GM12878 (cell line): ENCODE measurements at regions of chr18 and their contacts with region 1.

Region 1: DNA sequence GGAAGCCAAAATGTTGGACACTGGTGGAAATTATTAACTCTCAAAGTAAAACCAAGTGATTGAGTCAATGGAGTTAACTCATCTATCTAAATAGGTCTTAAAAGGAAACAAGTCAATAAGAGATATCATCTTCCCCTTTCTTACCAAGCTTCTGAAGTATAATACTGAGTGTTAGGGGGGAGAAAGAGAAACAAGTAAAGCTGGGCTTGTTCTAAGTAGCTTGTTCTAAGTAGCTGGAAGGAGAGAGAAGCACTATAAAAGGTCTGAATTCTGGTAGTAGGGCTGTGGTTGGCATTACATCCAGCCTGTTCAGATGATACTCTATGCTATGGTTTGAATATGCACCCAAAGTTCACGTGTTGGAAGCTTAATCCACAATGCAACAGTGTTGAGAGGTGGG is 26.8 kb downstream of the YES1 start:
- DNase-seq: no peak
- ATAC-seq: peak; percentile 69
- H3K4me3 ChIP-seq: no peak overlapping the region
- H3K27ac ChIP-seq: no peak overlapping the region
- H3K4me1 ChIP-seq: peaks cover 4% of the 10 kb centered on the region
- H3K27me3 ChIP-seq: no peaks in the 10 kb centered on the region
- CTCF ChIP-seq: no peak
- EP300 ChIP-seq: no peak
- POLR2A ChIP-seq: no peak
- RAD21 ChIP-seq: no peak

Region 2: GRCh38 chr18:805008-805754 is 19.9 kb after region 1 on chr18:
- CTCF ChIA-PET with region 1: interaction called, 5 read pairs
- POLR2A ChIA-PET with region 1: interaction called, 4 read pairs
- RAD21 ChIA-PET with region 1: interaction called, 8 read pairs
- SMC1A ChIA-PET with region 1: interaction called, 74 read pairs
- in situ Hi-C with region 1: no loop called
- intact Hi-C with region 1: no loop called
- DNase-seq: no peak
- ATAC-seq: peak; percentile 64
- H3K4me3 ChIP-seq: peak overlapping the region; percentile 31; the same call in 1 of the 2 replicates
- H3K27ac ChIP-seq: peak overlapping the region; percentile 60
- H3K4me1 ChIP-seq: peaks cover 18% of the 10 kb centered on the region
- H3K27me3 ChIP-seq: no peaks in the 10 kb centered on the region
- CTCF ChIP-seq: no peak
- EP300 ChIP-seq: no peak
- POLR2A ChIP-seq: no peak
- RAD21 ChIP-seq: no peak

Region 3: GRCh38 chr18:892316-892715 is 107.1 kb after region 1 on chr18:
- CTCF ChIA-PET with region 1: no interaction called
- POLR2A ChIA-PET with region 1: no interaction called
- RAD21 ChIA-PET with region 1: no interaction called
- SMC1A ChIA-PET with region 1: no interaction called
- in situ Hi-C with region 1: no loop called
- intact Hi-C with region 1: no loop called
- DNase-seq: no peak
- ATAC-seq: no peak
- H3K4me3 ChIP-seq: no peak overlapping the region
- H3K27ac ChIP-seq: no peak overlapping the region
- H3K4me1 ChIP-seq: no peaks in the 10 kb centered on the region
- H3K27me3 ChIP-seq: no peaks in the 10 kb centered on the region
- CTCF ChIP-seq: no peak
- EP300 ChIP-seq: no peak
- POLR2A ChIP-seq: no peak
- RAD21 ChIP-seq: no peak